ENCODE measurements at regions of chr2 and their contacts with region 1.

Region 1: DNA sequence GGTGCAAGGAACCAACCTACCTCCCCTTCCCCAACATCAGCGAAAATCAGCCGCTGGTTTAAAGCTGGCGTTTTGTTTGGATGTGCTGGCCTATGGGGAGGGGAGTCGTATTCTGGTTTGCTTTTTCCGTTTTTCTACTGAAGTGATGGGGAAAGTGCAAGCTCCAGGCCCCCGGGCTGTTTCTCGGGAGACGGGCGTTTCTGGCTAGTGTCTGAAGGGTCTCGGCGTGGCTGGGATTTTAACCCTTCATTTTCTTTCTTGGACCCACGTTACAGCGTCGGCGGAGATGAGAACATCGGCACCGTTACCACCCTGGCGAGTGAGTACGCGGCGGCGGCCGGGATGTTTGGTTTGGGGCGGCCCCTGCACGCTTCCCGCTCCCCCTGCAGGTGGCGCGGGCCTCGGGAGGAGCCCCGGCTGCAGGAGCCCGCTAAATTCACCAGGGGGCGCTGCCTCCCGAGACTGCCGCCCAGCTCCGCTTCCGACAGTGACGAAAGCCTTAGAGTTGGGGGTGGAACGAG is 70.7 kb downstream of the PLB1 start:
- DNase-seq: peak; percentile 91
- ATAC-seq: peak; percentile 99
- H3K4me3 Mint-ChIP-seq: peak overlapping the region; percentile 81
- H3K27ac Mint-ChIP-seq: peak overlapping the region; percentile 76
- H3K4me1 Mint-ChIP-seq: peaks cover 11% of the 10 kb centered on the region
- H3K27me3 Mint-ChIP-seq: peaks cover 2% of the 10 kb centered on the region
- CTCF ChIP-seq: peak; percentile 100

Region 2: DNA sequence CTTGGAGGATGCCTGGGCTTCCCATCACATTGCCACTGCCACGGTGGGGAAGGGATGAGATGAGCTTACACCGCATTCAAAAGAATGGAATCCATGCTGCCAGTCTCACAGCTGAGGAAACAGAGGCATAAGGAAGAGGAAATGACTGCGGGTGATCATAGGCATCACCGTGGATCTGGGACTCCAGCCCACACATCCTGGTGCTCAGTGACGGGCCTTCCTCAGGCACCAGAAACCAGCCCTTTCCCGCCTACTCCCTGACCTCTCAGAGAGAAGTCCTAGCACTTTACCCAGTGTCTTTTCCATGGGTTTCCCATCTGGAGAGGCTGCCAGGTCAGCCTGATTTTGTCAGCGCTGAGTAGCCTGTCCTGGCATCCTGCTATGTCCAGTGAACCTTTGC is 76.0 kb before region 1 on chr2:
- CTCF ChIA-PET with region 1: no interaction called
- POLR2A ChIA-PET with region 1: no interaction called
- intact Hi-C with region 1: no loop called
- DNase-seq: no peak
- ATAC-seq: no peak
- H3K4me3 Mint-ChIP-seq: no peak overlapping the region
- H3K27ac Mint-ChIP-seq: no peak overlapping the region
- H3K4me1 Mint-ChIP-seq: no peaks in the 10 kb centered on the region
- H3K27me3 Mint-ChIP-seq: no peaks in the 10 kb centered on the region
- CTCF ChIP-seq: no peak

Region 3: GRCh38 chr2:28577791-28578680 is 11.5 kb after region 1 on chr2:
- CTCF ChIA-PET with region 1: interaction called, 16 read pairs
- POLR2A ChIA-PET with region 1: no interaction called
- intact Hi-C with region 1: no loop called
- DNase-seq: no peak
- ATAC-seq: no peak
- H3K4me3 Mint-ChIP-seq: no peak overlapping the region
- H3K27ac Mint-ChIP-seq: no peak overlapping the region
- H3K4me1 Mint-ChIP-seq: peaks cover 3% of the 10 kb centered on the region
- H3K27me3 Mint-ChIP-seq: no peaks in the 10 kb centered on the region
- CTCF ChIP-seq: no peak

Region 4: DNA sequence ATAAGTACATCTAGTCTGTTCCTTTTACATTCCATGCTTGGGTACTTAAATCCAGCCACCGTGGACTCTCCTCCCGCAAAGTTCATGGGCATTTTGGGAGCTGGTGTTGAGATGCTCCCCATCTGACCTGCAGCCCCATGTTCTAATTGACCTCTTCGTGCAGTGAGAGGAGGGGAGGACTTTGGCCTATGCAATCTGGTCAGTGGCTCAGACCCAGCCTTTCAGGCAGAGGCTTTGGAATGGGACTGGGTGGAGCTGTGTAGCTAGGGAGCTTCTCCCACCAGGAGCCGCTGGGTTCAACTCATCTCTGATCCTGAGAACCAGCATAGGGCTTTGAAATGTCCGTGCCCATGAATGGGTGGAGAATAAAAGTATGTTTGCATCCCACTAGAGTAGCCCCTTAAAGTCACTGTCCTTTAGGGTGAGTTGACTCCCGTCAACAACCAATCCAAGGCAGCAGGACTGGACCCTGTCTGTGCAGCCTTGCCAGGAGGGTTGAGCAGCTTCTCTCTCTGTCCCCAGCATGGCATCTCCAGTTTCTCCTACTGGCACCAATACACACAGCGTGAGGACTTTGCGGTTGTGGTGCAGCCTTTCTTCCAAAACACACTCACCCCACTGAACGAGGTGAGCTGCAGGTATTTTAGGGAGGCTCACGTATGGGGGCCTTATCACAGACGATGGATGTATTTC is 65.1 kb after region 1 on chr2:
- CTCF ChIA-PET with region 1: interaction called, 10 read pairs
- POLR2A ChIA-PET with region 1: no interaction called
- intact Hi-C with region 1: no loop called
- DNase-seq: no peak
- ATAC-seq: no peak
- H3K4me3 Mint-ChIP-seq: no peak overlapping the region
- H3K27ac Mint-ChIP-seq: no peak overlapping the region
- H3K4me1 Mint-ChIP-seq: peaks cover 15% of the 10 kb centered on the region
- H3K27me3 Mint-ChIP-seq: no peaks in the 10 kb centered on the region
- CTCF ChIP-seq: no peak

Region 5: DNA sequence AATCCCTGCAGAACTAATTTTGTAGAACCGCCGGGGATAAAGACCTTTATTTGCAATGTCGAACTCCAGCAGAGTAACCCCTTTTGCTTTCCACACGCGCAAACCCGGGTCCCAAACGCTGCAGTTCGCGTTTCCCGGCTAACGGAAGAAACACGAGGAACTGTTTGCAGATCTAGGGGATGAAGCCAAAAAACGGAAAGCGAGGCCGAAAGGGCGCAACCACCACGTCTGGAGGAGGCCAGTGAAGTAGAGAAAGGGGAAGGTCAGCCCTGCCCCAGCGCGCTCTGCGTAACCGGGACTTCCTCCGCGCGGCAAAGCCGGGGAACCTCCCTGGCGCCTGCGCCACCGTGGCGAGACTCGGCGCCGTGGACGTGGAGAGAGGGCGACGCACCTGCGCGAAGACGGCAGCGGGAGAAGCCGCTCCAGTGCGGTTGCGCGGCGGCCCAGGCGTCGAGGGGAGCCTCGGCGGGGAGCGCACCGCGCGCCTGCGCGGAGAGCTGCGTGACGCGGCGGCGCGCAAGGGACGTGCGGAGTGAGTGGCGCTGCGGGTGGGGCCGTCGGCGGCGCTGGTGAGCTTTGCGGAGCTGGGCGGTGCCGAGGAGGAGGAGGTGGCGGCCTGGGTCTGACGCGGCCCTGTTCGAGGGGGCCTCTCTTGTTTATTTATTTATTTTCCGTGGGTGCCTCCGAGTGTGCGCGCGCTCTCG is 184.8 kb after region 1 on chr2 and contains the start of gene PPP1CB:
- CTCF ChIA-PET with region 1: interaction called, 12 read pairs
- POLR2A ChIA-PET with region 1: no interaction called
- intact Hi-C with region 1: loop called (anchors 2 kb)
- DNase-seq: peak; percentile 93
- ATAC-seq: peak; percentile 89
- H3K4me3 Mint-ChIP-seq: peak within 1 kb of the TSS; percentile 94
- H3K27ac Mint-ChIP-seq: peak within 1 kb of the TSS; percentile 96
- H3K4me1 Mint-ChIP-seq: peaks cover 54% of the 10 kb centered on the region
- H3K27me3 Mint-ChIP-seq: no peaks in the 10 kb centered on the region
- CTCF ChIP-seq: no peak
- total RNA-seq, gene PPP1CB: 206 to 216 TPM

Region 6: DNA sequence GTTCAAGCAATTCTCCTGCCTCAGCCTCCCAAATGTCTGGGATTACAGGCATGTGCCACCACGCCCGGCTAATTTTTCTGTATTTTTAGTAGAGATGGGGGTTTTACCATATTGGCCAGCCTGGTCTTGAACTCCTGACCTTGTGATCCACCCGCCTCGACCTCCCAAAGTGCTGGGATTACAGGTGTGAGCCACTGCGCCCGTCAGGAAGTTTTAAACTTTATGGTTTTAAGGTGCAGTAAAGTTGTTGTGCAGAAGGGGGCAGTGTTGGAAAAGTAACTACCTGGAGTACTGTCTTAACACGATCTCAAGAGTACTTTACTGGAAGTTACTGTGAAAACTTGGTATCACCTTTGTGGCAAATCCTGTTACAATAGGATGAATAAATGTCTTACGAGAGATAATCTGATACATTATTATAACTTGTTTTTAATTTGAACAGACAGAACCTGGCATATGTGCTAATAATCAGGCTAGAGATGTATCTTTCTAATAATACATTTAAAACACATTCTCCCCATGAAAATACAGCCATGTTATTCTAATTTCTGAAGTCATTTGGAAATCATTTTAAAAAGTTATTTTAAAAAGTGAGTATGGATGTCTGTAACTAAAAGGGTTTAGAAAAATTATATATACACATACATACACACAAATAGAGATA is 254.8 kb after region 1 on chr2:
- CTCF ChIA-PET with region 1: interaction called, 22 read pairs
- POLR2A ChIA-PET with region 1: no interaction called
- intact Hi-C with region 1: no loop called
- DNase-seq: peak; percentile 77
- ATAC-seq: peak; percentile 95
- H3K4me3 Mint-ChIP-seq: no peak overlapping the region
- H3K27ac Mint-ChIP-seq: no peak overlapping the region
- H3K4me1 Mint-ChIP-seq: peaks cover 7% of the 10 kb centered on the region
- H3K27me3 Mint-ChIP-seq: no peaks in the 10 kb centered on the region
- CTCF ChIP-seq: peak; percentile 79

Measured in activated CD8-positive, alpha-beta T cell treated with anti-CD3 and anti-CD28 coated beads for 36 hours (primary cell).